PC-9 (cell line): ENCODE measurements at regions of chr10 and their contacts with region 1.

Region 1: GRCh38 chr10:129531247-129531968 is 64.4 kb downstream of the MGMT start:
- DNase-seq: peak; percentile 40 to 92
- H3K4me3 ChIP-seq: no peak overlapping the region; the same call in 1 of the 2 replicates
- H3K27ac ChIP-seq: peak overlapping the region; percentile 81
- H3K4me1 ChIP-seq: peaks cover 17% of the 10 kb centered on the region
- H3K27me3 ChIP-seq: no peaks in the 10 kb centered on the region
- CTCF ChIP-seq: no peak

Region 2: DNA sequence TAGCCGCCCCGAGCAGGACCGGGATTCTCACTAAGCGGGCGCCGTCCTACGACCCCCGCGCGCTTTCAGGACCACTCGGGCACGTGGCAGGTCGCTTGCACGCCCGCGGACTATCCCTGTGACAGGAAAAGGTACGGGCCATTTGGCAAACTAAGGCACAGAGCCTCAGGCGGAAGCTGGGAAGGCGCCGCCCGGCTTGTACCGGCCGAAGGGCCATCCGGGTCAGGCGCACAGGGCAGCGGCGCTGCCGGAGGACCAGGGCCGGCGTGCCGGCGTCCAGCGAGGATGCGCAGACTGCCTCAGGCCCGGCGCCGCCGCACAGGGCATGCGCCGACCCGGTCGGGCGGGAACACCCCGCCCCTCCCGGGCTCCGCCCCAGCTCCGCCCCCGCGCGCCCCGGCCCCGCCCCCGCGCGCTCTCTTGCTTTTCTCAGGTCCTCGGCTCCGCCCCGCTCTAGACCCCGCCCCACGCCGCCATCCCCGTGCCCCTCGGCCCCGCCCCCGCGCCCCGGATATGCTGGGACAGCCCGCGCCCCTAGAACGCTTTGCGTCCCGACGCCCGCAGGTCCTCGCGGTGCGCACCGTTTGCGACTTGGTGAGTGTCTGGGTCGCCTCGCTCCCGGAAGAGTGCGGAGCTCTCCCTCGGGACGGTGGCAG is 64.6 kb before region 1 on chr10 and contains the start of gene MGMT:
- CTCF ChIA-PET with region 1: no interaction called
- POLR2A ChIA-PET with region 1: interaction called, 8 read pairs
- intact Hi-C with region 1: loop called (anchors 10 kb)
- DNase-seq: peak; percentile 47 to 84
- H3K4me3 ChIP-seq: peak within 1 kb of the TSS; percentile 63
- H3K27ac ChIP-seq: no peak within 1 kb of the TSS
- H3K4me1 ChIP-seq: peaks cover 15% of the 10 kb centered on the region
- H3K27me3 ChIP-seq: no peaks in the 10 kb centered on the region
- CTCF ChIP-seq: no peak
- total RNA-seq, gene MGMT: 21.2 and 28.1 TPM in 2 replicates

Region 3: GRCh38 chr10:129622736-129623135 is 91.3 kb after region 1 on chr10:
- CTCF ChIA-PET with region 1: no interaction called
- POLR2A ChIA-PET with region 1: no interaction called
- intact Hi-C with region 1: no loop called
- DNase-seq: no peak
- H3K4me3 ChIP-seq: no peak overlapping the region
- H3K27ac ChIP-seq: no peak overlapping the region
- H3K4me1 ChIP-seq: no peaks in the 10 kb centered on the region
- H3K27me3 ChIP-seq: no peaks in the 10 kb centered on the region
- CTCF ChIP-seq: no peak